A549 (cell line): ENCODE measurements at regions of chr1 and their contacts with region 1.

Region 1: DNA sequence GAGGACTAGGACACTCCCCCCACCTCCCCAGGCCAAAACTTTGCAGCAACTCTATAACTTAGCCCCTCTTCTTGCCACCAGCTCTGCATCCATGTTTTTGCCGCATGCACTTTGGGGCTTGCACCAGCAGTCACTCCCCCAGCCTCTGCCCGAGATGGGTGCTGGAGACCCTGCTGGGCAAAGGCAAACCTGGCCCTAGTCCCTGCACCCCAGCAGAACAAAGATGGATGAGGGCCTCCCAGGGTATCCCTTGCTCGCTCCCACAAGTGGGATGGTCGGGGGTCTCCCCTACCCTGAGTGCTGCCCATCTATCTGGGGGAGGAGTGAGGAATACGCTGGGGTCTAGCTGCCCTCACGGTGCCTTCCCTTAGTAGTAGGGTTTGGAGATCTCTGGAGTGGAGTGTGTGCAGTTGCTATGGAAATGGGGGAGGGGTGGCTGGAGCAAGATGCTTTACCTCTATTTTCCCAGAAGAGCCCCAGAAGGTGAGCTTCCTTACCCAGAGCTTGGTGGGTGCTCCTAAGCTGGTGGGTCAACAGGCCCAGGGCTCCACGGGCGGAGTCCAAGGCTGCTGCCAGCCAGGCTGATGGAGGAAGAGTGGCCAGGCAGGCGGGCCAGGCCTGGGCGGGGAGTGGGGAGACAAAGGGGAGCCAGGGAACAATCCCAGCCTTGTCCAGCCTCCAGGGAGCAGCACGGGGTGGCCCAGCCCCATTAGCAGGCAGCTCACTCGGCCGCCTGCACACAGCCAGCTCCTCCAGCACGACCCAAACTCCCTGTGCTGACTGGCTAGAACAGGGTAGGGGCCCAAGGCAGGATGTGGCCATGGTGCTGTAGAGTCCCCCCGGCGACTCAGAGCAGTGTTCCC is at the start of gene PAQR6:
- DNase-seq: no peak
- ATAC-seq: peak; percentile 12 to 20; a peak in 4 of 6 replicates
- H3K4me3 ChIP-seq: no peak within 1 kb of the TSS
- H3K27ac ChIP-seq: no peak within 1 kb of the TSS
- H3K4me1 ChIP-seq: peaks cover 12% of the 10 kb centered on the region
- CTCF ChIP-seq: no peak
- EP300 ChIP-seq: no peak
- POLR2A ChIP-seq: no peak
- RAD21 ChIP-seq: no peak
- polyA plus RNA-seq, gene PAQR6: 2.4 and 2.8 TPM in 2 replicates

Region 2: DNA sequence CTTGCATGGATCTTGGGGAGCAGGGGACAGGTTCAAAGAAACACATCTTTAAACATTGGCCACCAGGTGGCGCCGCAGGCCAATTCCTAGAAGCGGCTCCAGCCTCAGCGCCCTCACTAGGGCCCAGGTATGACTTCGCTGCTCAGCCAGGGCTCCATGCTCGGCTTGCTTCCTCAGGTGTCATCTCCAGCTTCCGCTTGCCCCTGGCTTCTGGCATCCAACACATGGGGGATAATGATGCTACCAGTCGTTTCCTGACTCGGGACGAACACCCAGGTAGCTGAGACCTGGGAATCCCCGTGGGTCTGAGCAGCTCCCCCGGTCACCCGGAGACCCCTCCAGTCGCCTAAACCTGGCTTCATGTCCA is 156.9 kb before region 1 on chr1:
- CTCF ChIA-PET with region 1: interaction called, 10 read pairs
- POLR2A ChIA-PET with region 1: no interaction called
- DNase-seq: peak; percentile 85
- ATAC-seq: peak; percentile 95 to 96
- H3K4me3 ChIP-seq: no peak overlapping the region
- H3K27ac ChIP-seq: peak overlapping the region; percentile 38 to 84; a peak in 5 of 6 replicates
- H3K4me1 ChIP-seq: peaks cover 24% of the 10 kb centered on the region
- CTCF ChIP-seq: peak; percentile 93
- EP300 ChIP-seq: no peak
- POLR2A ChIP-seq: no peak
- RAD21 ChIP-seq: peak; percentile 97

Region 3: DNA sequence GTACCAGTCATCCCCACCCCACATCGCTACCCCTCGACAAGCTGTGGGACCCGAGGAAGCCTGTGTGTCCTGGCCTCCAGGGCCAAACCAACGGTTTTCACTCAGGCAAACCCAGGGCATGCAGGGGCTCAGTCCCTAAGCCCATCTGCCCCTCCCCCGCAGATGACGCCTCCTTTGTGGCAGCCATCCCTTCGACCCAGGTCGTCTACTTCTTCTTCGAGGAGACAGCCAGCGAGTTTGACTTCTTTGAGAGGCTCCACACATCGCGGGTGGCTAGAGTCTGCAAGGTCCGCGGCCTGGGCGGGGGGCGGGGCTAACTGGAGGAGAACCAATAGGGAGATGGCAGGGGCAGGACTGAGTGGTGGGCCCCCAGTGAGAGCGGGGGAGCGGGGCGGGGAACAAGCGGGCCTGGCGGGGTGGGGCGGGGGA is 86.9 kb before region 1 on chr1:
- CTCF ChIA-PET with region 1: no interaction called
- POLR2A ChIA-PET with region 1: no interaction called
- DNase-seq: no peak
- ATAC-seq: no peak
- H3K4me3 ChIP-seq: no peak overlapping the region
- H3K27ac ChIP-seq: no peak overlapping the region
- H3K4me1 ChIP-seq: no peaks in the 10 kb centered on the region
- CTCF ChIP-seq: no peak
- EP300 ChIP-seq: no peak
- POLR2A ChIP-seq: no peak
- RAD21 ChIP-seq: no peak

Region 4: DNA sequence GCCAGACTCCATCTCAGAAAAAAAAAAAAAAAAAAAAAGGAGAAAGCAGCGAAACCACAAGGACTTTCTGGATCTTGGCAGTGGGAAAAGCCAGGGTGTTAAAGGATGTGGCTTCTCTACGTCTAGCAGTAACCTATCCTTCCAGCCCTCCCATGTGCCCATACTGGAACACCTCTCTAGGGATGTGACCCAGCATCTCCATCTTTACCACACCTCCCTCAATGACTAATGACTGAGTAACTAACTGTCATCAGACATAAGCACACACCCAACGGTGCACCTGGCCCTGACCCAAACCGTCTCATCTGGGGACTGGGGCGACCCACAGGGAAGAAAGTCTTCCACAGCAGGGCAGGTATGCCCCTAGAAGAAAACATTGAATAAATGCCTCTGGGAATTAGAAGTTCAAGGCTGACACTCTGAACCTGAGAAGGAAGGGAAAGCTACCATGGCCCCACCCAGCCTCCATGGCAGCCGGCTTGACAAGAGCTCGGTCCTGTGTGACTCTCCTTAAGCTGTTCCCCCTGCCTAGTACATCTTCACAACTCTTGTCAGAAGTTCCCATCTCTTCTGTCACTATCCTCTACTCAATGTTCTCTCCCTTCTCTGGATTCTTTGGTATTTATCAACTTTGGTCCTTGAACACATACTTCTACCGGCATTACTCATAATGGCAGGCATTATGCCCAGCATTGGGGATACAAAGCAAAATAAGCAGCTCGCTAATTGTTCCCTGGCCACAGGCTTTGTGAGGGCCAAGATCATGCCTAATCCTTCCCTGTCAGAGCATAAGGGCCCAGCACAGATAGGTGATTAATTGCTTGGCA is 15.0 kb after region 1 on chr1:
- CTCF ChIA-PET with region 1: interaction called, 17 read pairs
- POLR2A ChIA-PET with region 1: no interaction called
- DNase-seq: peak in 1 of 2 experiments; percentile 68
- ATAC-seq: peak; percentile 31 to 56; a peak in 4 of 6 replicates
- H3K4me3 ChIP-seq: no peak overlapping the region
- H3K27ac ChIP-seq: no peak overlapping the region
- H3K4me1 ChIP-seq: peaks cover 15% of the 10 kb centered on the region
- CTCF ChIP-seq: no peak
- EP300 ChIP-seq: no peak
- POLR2A ChIP-seq: no peak
- RAD21 ChIP-seq: no peak